Calu3 (cell line): ENCODE measurements at regions of chr1 and their contacts with region 1.

Region 1: GRCh38 chr1:212477014-212477679 is 44.4 kb downstream of the NENF start:
- DNase-seq: peak; percentile 91
- H3K4me3 Mint-ChIP-seq: no peak overlapping the region
- H3K27ac Mint-ChIP-seq: peak overlapping the region; percentile 88
- H3K4me1 Mint-ChIP-seq: peaks cover 41% of the 10 kb centered on the region
- H3K27me3 Mint-ChIP-seq: no peaks in the 10 kb centered on the region
- CTCF ChIP-seq: peak; percentile 95

Region 2: DNA sequence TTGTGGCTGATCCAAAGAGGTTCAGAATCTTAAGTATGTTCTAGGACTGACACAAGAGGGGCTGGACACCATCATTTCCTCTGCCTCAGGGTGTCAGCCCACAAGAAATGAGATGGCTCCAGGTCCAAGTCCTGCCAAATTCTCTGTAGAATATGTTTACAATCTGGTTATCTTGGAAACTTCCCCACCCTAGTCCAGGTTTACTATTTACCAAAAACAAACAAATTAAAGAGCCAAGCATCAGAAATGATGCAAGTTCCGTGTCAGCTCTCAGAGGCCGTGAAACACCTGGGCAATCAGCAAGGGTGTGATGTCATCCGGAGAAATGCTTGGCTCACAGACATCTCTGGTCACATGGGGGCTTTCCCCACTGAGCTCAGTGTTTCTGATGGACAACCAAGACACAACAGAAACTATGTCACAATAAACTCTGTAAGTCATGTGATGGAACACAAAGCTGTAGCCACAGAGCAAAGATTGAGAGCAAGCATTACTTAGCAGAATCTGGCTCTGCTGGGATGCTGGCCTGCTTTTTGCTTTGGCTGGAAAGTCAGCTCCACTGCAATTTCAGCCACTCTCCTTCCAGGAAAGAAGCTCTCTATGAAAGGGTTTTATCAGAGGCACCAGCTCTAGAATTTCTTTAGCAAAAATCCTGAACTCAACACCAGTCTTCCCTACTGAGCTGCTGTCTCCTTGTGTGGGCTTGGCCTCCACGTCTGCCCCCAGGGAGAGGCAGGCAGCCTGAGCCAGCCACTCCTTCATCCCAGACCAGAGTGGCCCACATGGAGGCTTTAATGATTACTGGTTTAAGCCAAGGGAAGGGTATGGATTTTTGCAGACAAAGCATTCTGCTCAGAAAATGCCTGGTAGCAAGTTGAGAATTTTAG is 11.5 kb after region 1 on chr1:
- CTCF ChIA-PET with region 1: interaction called, 19 read pairs
- intact Hi-C with region 1: no loop called
- DNase-seq: peak; percentile 83
- H3K4me3 Mint-ChIP-seq: peak overlapping the region; percentile 47
- H3K27ac Mint-ChIP-seq: peak overlapping the region; percentile 94
- H3K4me1 Mint-ChIP-seq: peaks cover 57% of the 10 kb centered on the region
- H3K27me3 Mint-ChIP-seq: no peaks in the 10 kb centered on the region
- CTCF ChIP-seq: no peak

Region 3: GRCh38 chr1:212608209-212608955 is 131.2 kb after region 1 on chr1 and contains the start of gene ATF3:
- CTCF ChIA-PET with region 1: interaction called, 34 read pairs
- intact Hi-C with region 1: no loop called
- DNase-seq: peak; percentile 99
- H3K4me3 Mint-ChIP-seq: peak within 1 kb of the TSS; percentile 82
- H3K27ac Mint-ChIP-seq: peak within 1 kb of the TSS; percentile 95
- H3K4me1 Mint-ChIP-seq: peaks cover 36% of the 10 kb centered on the region
- H3K27me3 Mint-ChIP-seq: peaks cover 65% of the 10 kb centered on the region
- CTCF ChIP-seq: no peak
- total RNA-seq, gene ATF3: 11.1 and 13.0 TPM in 2 replicates

Region 4: GRCh38 chr1:212749821-212750535 is 272.8 kb after region 1 on chr1:
- CTCF ChIA-PET with region 1: interaction called, 13 read pairs
- intact Hi-C with region 1: no loop called
- DNase-seq: peak; percentile 32
- H3K4me3 Mint-ChIP-seq: peak overlapping the region; percentile 29
- H3K27ac Mint-ChIP-seq: peak overlapping the region; percentile 88
- H3K4me1 Mint-ChIP-seq: peaks cover 20% of the 10 kb centered on the region
- H3K27me3 Mint-ChIP-seq: no peaks in the 10 kb centered on the region
- CTCF ChIP-seq: peak; percentile 53